Heart left ventricle (tissue), 16 donors: ENCODE measurements at regions of chr2 and their contacts with region 1.

Region 1: DNA sequence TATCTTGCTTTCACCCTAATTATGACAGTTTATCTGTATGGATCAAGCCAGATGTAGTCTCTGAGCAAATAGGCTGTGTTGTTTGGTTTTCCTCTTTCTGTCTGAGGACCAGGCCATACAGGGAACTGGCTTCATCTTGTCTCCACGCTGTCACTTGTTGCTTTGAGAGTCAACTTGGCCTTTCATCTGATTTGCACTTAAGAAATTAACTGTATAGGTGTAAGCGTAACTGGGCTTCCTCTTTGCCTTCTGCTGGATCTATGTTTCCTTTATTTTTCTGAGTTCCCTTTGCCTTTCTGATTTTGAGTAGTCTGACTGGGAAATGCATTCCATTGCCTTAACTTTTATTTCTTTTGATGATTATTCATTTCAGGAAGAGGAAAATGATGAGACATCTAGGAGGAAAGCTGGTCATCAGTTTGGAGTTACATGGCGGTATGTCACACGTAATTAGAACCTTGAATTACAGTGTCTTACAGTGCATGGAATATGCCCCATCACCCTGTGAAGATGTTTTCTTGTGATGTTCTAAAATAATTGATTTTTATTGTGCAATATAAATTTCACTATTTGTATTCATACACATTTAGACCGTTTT is 17.4 kb downstream of the PTCD3 start:
- DNase-seq: no peak
- ATAC-seq: no peak
- H3K4me3 ChIP-seq: no peak overlapping the region
- H3K27ac ChIP-seq: no peak overlapping the region
- H3K4me1 ChIP-seq: no peaks in the 10 kb centered on the region
- H3K27me3 ChIP-seq: no peaks in the 10 kb centered on the region
- CTCF ChIP-seq: no peak
- POLR2A ChIP-seq: no peak

Region 2: DNA sequence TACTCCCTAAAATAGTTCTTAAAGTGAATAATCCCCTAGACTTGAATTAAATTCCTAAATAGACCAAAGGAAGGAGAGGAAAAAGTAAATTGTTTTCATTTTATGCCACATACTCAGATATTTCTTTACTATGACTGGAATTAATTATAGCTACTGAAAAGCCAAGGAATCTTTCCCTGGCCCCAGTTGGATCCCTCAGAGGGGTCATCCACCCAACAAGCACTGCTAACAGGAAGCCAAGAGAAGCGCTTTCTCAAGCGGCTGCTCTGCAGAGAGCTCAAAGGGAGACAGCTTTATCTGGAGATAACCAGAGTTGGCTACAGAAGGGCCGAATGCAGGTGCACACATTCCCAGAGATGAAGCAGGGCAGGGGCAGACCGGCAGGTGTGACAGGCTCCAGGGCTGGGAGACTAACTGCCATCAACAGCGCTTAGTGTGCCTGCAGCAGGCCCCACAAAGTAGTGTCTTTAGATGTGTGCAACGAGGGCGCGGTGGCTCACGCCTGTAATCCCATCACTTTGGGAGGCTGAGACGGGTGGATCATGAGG is 68.8 kb before region 1 on chr2:
- intact Hi-C with region 1: no loop called
- DNase-seq: no peak
- ATAC-seq: no peak
- H3K4me3 ChIP-seq: no peak overlapping the region
- H3K27ac ChIP-seq: no peak overlapping the region
- H3K4me1 ChIP-seq: peaks cover 0 to 9% (median 0%) of the 10 kb centered on the region in 12 donors
- H3K27me3 ChIP-seq: no peaks in the 10 kb centered on the region
- CTCF ChIP-seq: no peak
- POLR2A ChIP-seq: no peak

Region 3: GRCh38 chr2:86160156-86160952 is 36.9 kb after region 1 on chr2:
- intact Hi-C with region 1: loop called in 1 of 10 experiments (anchors 5 kb)
- DNase-seq: no peak
- ATAC-seq: no peak
- H3K4me3 ChIP-seq: no peak overlapping the region
- H3K27ac ChIP-seq: no peak overlapping the region
- H3K4me1 ChIP-seq: no peaks in the 10 kb centered on the region
- H3K27me3 ChIP-seq: no peaks in the 10 kb centered on the region
- CTCF ChIP-seq: no peak
- POLR2A ChIP-seq: no peak

Region 4: DNA sequence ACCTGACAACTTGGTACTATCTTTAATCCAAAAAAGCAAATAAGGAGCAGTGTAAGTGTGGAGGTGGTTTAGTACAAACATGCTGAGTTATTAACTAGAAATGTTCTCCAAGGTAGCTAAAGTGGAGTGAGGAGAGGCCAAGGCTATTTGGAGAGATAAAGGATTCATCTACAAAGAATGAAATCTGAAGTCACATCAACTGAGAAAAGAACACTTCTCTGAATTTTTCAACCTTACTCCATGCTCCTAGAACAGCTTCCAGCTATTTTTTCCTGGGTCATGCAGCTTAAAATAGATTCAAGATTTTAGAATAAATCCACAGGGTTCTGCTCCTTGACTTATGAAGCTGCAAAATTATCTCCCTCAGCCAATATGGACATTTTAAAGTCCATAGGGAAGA is 53.2 kb after region 1 on chr2:
- intact Hi-C with region 1: loop called in 2 of 10 experiments (anchors 10 kb)
- DNase-seq: no peak
- ATAC-seq: peak in 1 of 4 donors; percentile 9
- H3K4me3 ChIP-seq: no peak overlapping the region
- H3K27ac ChIP-seq: no peak overlapping the region
- H3K4me1 ChIP-seq: peaks cover 0 to 30% (median 21%) of the 10 kb centered on the region in 12 donors
- H3K27me3 ChIP-seq: no peaks in the 10 kb centered on the region
- CTCF ChIP-seq: no peak
- POLR2A ChIP-seq: no peak